ENCODE measurements at regions of chr9 and their contacts with region 1.

Region 1: GRCh38 chr9:114155263-114155972 is at the start of gene COL27A1:
- DNase-seq: peak; percentile 70 to 87 (median 86)
- ATAC-seq: peak; percentile 90
- H3K4me3 ChIP-seq: no peak within 1 kb of the TSS
- H3K4me1 ChIP-seq: peaks cover 14% of the 10 kb centered on the region
- CTCF ChIP-seq: peak; percentile 86
- total RNA-seq, gene COL27A1: 3.1 to 13.6 (median 4.0) TPM

Region 2: DNA sequence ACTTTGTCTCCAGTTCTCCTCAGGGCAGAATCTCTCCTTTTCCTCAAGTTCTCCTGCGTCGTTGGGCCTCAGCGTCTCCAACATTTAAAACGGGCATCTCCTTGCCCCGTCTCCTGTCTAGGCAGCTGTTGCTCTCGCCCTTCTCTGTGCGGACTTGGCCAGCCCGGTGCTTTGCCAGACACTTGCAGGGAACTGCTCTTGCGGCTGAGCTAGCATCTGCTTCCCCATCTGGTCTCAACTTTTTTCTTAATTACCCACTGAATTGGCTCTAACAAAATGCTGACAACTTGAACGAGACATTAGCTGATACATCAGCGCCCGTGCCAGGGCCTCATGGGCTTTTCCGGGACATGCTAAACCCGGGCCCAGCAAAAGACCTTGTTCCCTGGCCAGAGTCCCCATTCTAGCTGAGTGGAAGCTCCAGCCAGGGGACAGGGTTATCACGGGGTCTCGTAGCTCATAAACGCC is 254.2 kb before region 1 on chr9:
- intact Hi-C with region 1: no loop called
- DNase-seq: no peak
- ATAC-seq: no peak
- H3K4me3 ChIP-seq: no peak overlapping the region
- H3K4me1 ChIP-seq: no peaks in the 10 kb centered on the region
- CTCF ChIP-seq: no peak

Region 3: GRCh38 chr9:114271641-114272081 is 116.2 kb after region 1 on chr9:
- intact Hi-C with region 1: loop called in 1 of 2 experiments (anchors 5 kb)
- DNase-seq: peak in 2 of 3 donors; percentile 41 to 47
- ATAC-seq: peak; percentile 47
- H3K4me3 ChIP-seq: no peak overlapping the region
- H3K4me1 ChIP-seq: no peaks in the 10 kb centered on the region
- CTCF ChIP-seq: no peak

Region 4: GRCh38 chr9:114285166-114285867 is 129.9 kb after region 1 on chr9:
- intact Hi-C with region 1: loop called (anchors 5 kb)
- DNase-seq: peak in 2 of 3 donors; percentile 43 to 62
- ATAC-seq: no peak
- H3K4me3 ChIP-seq: no peak overlapping the region
- H3K4me1 ChIP-seq: no peaks in the 10 kb centered on the region
- CTCF ChIP-seq: no peak